Posterior cingulate gyrus (tissue), 11 donors: ENCODE measurements at regions of chr13 and their contacts with region 1.

Region 1: GRCh38 chr13:94595950-94596574 is at the start of gene TGDS:
- DNase-seq: peak; percentile 75 to 98 (median 88)

Region 2: GRCh38 chr13:93298713-93299112 is 1297.3 kb before region 1 on chr13:
- intact Hi-C with region 1: no loop called
- DNase-seq: no peak

Region 3: GRCh38 chr13:94549232-94550061 is 46.6 kb before region 1 on chr13:
- intact Hi-C with region 1: loop called (anchors 5 kb)
- DNase-seq: peak; percentile 79 to 98 (median 88)